ENCODE measurements at regions of chr7 and their contacts with region 1.

Region 1: GRCh38 chr7:97027427-97028234 is 3.0 kb upstream of the DLX5 start:
- DNase-seq: no peak
- ATAC-seq: peak; percentile 71
- H3K4me3 Mint-ChIP-seq: peak overlapping the region; percentile 75
- H3K27ac Mint-ChIP-seq: no peak overlapping the region
- H3K4me1 Mint-ChIP-seq: peaks cover 23% of the 10 kb centered on the region
- H3K27me3 Mint-ChIP-seq: peaks cover 73% of the 10 kb centered on the region
- CTCF ChIP-seq: no peak

Region 2: DNA sequence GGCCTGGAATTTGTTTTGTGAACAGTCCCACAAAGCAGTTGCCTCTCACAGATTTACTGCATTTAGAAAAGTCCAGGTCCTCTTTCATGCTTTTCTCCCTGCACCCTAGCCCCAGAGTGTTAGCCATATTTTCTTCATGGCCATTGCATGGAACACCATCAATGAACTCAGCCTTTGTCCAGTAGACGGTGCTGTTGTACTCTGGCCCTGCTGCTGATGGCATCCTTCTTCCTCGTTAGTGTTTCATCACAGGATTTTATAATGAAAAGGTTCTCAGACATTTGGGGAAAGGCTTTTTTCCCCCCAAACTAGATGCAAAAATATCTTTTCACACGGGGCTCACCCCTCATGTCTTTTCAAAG is 612.7 kb before region 1 on chr7:
- CTCF ChIA-PET with region 1: no interaction called
- POLR2A ChIA-PET with region 1: no interaction called
- intact Hi-C with region 1: loop called (anchors 2 kb)
- DNase-seq: no peak
- ATAC-seq: no peak
- H3K4me3 Mint-ChIP-seq: no peak overlapping the region
- H3K27ac Mint-ChIP-seq: no peak overlapping the region
- H3K4me1 Mint-ChIP-seq: no peaks in the 10 kb centered on the region
- H3K27me3 Mint-ChIP-seq: peaks cover 4% of the 10 kb centered on the region
- CTCF ChIP-seq: no peak

Region 3: GRCh38 chr7:97006036-97006815 is 21.4 kb before region 1 on chr7:
- CTCF ChIA-PET with region 1: interaction called, 15 read pairs
- POLR2A ChIA-PET with region 1: no interaction called
- intact Hi-C with region 1: loop called (anchors 2 kb)
- DNase-seq: no peak
- ATAC-seq: peak; percentile 34
- H3K4me3 Mint-ChIP-seq: peak overlapping the region; percentile 69
- H3K27ac Mint-ChIP-seq: no peak overlapping the region
- H3K4me1 Mint-ChIP-seq: peaks cover 23% of the 10 kb centered on the region
- H3K27me3 Mint-ChIP-seq: peaks cover 64% of the 10 kb centered on the region
- CTCF ChIP-seq: no peak

Region 4: GRCh38 chr7:97078023-97078969 is 50.7 kb after region 1 on chr7:
- CTCF ChIA-PET with region 1: no interaction called
- POLR2A ChIA-PET with region 1: no interaction called
- intact Hi-C with region 1: no loop called
- DNase-seq: no peak
- ATAC-seq: peak; percentile 66
- H3K4me3 Mint-ChIP-seq: no peak overlapping the region
- H3K27ac Mint-ChIP-seq: no peak overlapping the region
- H3K4me1 Mint-ChIP-seq: peaks cover 14% of the 10 kb centered on the region
- H3K27me3 Mint-ChIP-seq: peaks cover 8% of the 10 kb centered on the region
- CTCF ChIP-seq: no peak